ENCODE measurements at regions of chr6 and their contacts with region 1.

Region 1: GRCh38 chr6:142387997-142388815 is 86.4 kb downstream of the ADGRG6 start:
- DNase-seq: no peak
- ATAC-seq: peak; percentile 68
- H3K4me3 Mint-ChIP-seq: no peak overlapping the region
- H3K27ac Mint-ChIP-seq: no peak overlapping the region
- H3K4me1 Mint-ChIP-seq: peaks cover 3% of the 10 kb centered on the region
- H3K27me3 Mint-ChIP-seq: no peaks in the 10 kb centered on the region
- CTCF ChIP-seq: peak; percentile 63

Region 2: GRCh38 chr6:142146828-142147662 is 241.2 kb before region 1 on chr6 and contains the starts of genes NMBR and VTA1:
- CTCF ChIA-PET with region 1: interaction called, 5 read pairs
- POLR2A ChIA-PET with region 1: no interaction called
- intact Hi-C with region 1: loop called (anchors 5 kb)
- DNase-seq: peak; percentile 98
- ATAC-seq: peak; percentile 98
- H3K4me3 Mint-ChIP-seq: peak within 1 kb of the TSS; percentile 96
- H3K27ac Mint-ChIP-seq: peak within 1 kb of the TSS; percentile 91
- H3K4me1 Mint-ChIP-seq: peaks cover 46% of the 10 kb centered on the region
- H3K27me3 Mint-ChIP-seq: no peaks in the 10 kb centered on the region
- CTCF ChIP-seq: peak; percentile 92
- total RNA-seq, gene NMBR: not detected
- total RNA-seq, gene VTA1: 53.8 to 57.1 TPM

Region 3: GRCh38 chr6:142155895-142156757 is 232.1 kb before region 1 on chr6:
- CTCF ChIA-PET with region 1: interaction called, 13 read pairs
- POLR2A ChIA-PET with region 1: no interaction called
- intact Hi-C with region 1: no loop called
- DNase-seq: no peak
- ATAC-seq: peak; percentile 53
- H3K4me3 Mint-ChIP-seq: peak overlapping the region; percentile 0
- H3K27ac Mint-ChIP-seq: no peak overlapping the region
- H3K4me1 Mint-ChIP-seq: peaks cover 53% of the 10 kb centered on the region
- H3K27me3 Mint-ChIP-seq: no peaks in the 10 kb centered on the region
- CTCF ChIP-seq: peak; percentile 62

Region 4: GRCh38 chr6:142236691-142237090 is 151.5 kb before region 1 on chr6:
- CTCF ChIA-PET with region 1: interaction called, 3 read pairs
- POLR2A ChIA-PET with region 1: no interaction called
- intact Hi-C with region 1: loop called (anchors 2 kb)
- DNase-seq: no peak
- ATAC-seq: no peak
- H3K4me3 Mint-ChIP-seq: no peak overlapping the region
- H3K27ac Mint-ChIP-seq: no peak overlapping the region
- H3K4me1 Mint-ChIP-seq: peaks cover 11% of the 10 kb centered on the region
- H3K27me3 Mint-ChIP-seq: no peaks in the 10 kb centered on the region
- CTCF ChIP-seq: no peak

Region 5: DNA sequence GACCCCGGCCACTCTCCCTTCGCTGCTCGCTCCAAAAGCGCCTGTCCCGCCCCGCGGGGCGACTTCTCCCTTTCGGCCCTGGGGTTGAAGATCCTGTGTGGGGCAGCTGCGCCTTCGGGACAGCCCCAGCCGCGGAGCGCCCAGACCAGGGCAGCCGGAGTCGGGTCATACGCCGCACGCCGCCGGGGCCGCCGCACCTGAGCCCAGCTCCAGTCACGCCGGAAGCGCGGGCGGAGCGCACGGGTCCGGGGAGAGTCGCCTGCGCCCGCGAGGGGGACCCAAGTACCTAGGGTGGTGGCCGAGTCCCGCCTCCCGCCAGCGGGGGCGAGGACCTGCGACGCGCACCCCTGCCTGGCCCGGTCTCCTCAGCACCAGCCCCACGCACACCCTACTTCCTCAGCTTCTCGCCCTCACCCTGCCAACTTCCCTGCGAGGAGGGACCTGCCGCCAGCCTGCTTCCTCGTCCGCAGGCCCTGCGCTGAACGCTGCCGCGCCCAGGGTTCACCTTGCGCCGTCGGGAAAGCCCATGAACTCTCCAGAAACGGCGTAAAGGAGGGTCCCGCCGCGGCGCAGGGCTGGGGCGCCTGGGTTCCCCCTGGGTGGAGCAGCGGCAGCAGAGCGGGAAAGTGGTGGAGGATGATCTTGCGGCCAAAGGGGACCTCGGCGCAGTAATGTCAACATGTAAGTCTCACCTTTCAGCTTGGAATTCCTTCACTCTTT is 86.4 kb before region 1 on chr6 and contains the start of gene ADGRG6:
- CTCF ChIA-PET with region 1: interaction called, 3 read pairs
- POLR2A ChIA-PET with region 1: no interaction called
- intact Hi-C with region 1: loop called (anchors 5 kb)
- DNase-seq: peak; percentile 65
- ATAC-seq: peak; percentile 88
- H3K4me3 Mint-ChIP-seq: peak within 1 kb of the TSS; percentile 76
- H3K27ac Mint-ChIP-seq: no peak within 1 kb of the TSS
- H3K4me1 Mint-ChIP-seq: peaks cover 6% of the 10 kb centered on the region
- H3K27me3 Mint-ChIP-seq: peaks cover 14% of the 10 kb centered on the region
- CTCF ChIP-seq: peak; percentile 24
- total RNA-seq, gene ADGRG6: 1.3 to 1.5 TPM